ENCODE measurements at regions of chr3 and their contacts with region 1.

Region 1: DNA sequence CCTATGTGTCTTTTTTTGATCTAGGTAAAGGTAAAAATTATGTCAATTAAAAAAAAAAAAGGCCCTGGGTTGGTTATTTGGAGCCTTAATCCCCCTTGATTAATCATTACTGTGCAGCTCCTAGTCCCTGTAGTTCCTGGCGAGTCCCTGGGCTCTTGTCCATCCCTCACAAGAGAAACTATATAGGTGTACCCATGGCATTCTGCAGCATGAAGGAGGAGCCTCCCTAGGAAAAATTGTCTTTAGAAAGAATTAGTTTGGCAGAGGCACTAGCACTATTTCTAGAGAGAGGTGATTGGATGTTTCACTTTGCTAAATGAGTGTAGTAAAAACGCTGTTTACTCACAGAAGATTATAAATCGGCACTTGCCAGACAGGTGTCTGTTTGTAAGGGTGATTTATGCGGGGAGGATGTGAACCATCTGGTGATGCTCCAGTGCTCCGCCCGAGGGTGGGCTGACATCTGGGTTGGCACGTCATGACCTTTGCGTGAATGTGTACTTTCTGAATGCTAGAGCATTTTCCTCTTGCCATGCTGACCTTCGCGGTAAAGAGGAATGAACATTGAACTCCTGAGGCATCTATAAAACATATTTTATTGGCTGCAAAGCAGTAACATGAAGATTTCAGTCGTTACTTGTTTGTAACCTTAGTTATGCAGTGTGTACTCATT is 12.6 kb downstream of the PLCL2 start:
- DNase-seq: peak; percentile 55
- H3K4me3 Mint-ChIP-seq: peak overlapping the region; percentile 26
- H3K27ac Mint-ChIP-seq: peak overlapping the region; percentile 57
- H3K4me1 Mint-ChIP-seq: peaks cover 86% of the 10 kb centered on the region
- H3K27me3 Mint-ChIP-seq: no peaks in the 10 kb centered on the region

Region 2: DNA sequence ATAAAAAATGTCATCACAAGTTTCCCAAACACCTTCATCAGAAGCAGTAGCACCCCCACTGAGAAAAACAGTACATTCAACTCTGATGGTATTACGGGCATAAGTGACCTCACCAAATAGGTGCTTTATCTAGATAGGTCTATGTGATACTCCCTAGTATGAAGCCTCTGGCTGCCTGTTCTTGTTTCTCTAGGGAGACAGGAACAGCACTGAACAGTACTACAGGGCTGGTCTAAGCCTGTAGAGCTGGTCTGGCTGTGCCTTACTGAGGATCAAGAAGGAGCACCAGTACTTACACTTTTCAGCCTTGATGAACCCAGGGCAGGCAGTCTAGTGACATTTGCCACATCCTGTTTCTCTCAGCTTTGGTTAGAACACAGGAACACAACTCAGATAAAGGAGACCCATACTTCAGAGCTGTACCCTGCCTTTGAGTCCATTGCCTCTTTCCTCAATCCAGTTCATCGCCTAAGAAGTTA is 596.5 kb before region 1 on chr3:
- CTCF ChIA-PET with region 1: no interaction called
- POLR2A ChIA-PET with region 1: no interaction called
- intact Hi-C with region 1: loop called (anchors 5 kb)
- DNase-seq: peak; percentile 62
- H3K4me3 Mint-ChIP-seq: peak overlapping the region; percentile 66
- H3K27ac Mint-ChIP-seq: peak overlapping the region; percentile 91
- H3K4me1 Mint-ChIP-seq: peaks cover 96% of the 10 kb centered on the region
- H3K27me3 Mint-ChIP-seq: no peaks in the 10 kb centered on the region

Region 3: GRCh38 chr3:16912400-16913263 is 15.2 kb after region 1 on chr3:
- CTCF ChIA-PET with region 1: interaction called, 3 read pairs
- POLR2A ChIA-PET with region 1: interaction called, 3 read pairs
- intact Hi-C with region 1: loop called (anchors 2 kb)
- DNase-seq: no peak
- H3K4me3 Mint-ChIP-seq: no peak overlapping the region
- H3K27ac Mint-ChIP-seq: peak overlapping the region; percentile 71
- H3K4me1 Mint-ChIP-seq: peaks cover 70% of the 10 kb centered on the region
- H3K27me3 Mint-ChIP-seq: no peaks in the 10 kb centered on the region

Region 4: DNA sequence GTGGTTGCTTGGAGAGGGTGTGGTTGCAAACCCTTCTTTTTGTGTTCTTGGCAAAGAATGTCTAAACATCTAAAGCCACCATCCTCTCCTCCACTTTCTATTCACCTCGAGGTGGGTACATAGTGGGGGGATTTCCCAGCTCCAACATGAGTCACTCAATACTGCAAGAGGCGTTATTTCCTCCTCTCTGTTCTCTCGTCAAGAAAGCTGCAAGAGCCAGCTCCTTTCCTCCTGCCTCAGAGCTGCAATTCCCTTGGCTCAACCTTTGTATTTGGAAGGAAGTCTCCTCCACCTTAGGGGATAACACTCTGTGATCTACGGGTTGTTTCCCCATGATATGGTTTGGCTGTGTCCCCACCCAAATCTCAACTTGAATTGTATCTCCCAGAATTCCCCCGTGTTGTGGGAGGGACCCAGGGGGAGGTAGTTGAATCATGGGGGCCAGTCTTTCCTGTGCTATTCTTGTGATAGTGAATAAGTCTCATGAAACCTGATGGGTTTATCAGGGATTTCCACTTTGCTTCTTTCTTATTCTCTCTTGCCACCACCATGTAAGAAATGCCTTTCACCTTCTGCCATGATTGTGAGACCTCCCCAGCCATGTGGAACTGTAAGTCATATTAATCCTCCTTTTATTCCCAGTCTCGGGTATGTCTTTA is 125.7 kb after region 1 on chr3:
- CTCF ChIA-PET with region 1: no interaction called
- POLR2A ChIA-PET with region 1: no interaction called
- intact Hi-C with region 1: loop called (anchors 2 kb)
- DNase-seq: peak; percentile 72
- H3K4me3 Mint-ChIP-seq: peak overlapping the region; percentile 52
- H3K27ac Mint-ChIP-seq: peak overlapping the region; percentile 87
- H3K4me1 Mint-ChIP-seq: peaks cover 73% of the 10 kb centered on the region
- H3K27me3 Mint-ChIP-seq: no peaks in the 10 kb centered on the region

Measured in activated CD4-positive, alpha-beta memory T cell treated with anti-CD3 and anti-CD28 coated beads for 36 hours (primary cell).